HepG2 (cell line): ENCODE measurements at regions of chr5 and their contacts with region 1.

Region 1: DNA sequence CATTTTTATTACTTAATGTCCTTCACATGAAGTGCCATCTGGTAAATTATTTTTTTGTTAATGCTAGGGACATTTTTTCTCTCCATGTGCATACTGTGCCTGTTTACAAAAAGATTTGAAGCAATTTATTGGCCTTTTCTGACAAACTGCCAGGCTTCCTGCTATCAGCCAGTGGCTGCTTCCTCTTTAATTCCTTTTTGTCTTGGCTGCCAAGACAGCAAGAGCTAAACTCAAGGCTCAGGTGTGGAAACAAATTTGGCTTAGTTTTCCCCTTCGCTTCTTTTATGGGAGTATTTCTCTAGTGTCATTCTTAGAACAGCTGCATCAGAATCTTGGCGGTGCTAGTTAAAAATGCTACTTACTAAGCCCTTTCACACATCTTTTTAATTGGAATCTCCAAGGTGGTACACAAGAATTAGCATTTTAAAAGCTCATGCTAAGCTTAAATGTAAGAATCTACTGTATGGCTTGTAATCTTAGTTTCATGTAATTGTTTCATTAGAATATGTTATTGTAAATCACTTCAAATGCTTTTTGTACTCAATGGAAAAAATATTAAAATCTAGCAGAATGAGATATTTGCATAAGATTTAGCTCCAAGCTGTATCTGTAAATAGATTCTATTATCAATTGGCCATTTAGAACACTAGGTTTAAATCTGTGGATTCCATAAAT is 134.2 kb upstream of the RASGRF2 start:
- DNase-seq: no peak
- ATAC-seq: no peak
- H3K4me3 ChIP-seq: no peak overlapping the region
- H3K27ac ChIP-seq: no peak overlapping the region
- H3K4me1 ChIP-seq: no peaks in the 10 kb centered on the region
- H3K27me3 ChIP-seq: no peaks in the 10 kb centered on the region
- CTCF ChIP-seq: no peak
- EP300 ChIP-seq: no peak
- POLR2A ChIP-seq: no peak
- RAD21 ChIP-seq: no peak

Region 2: DNA sequence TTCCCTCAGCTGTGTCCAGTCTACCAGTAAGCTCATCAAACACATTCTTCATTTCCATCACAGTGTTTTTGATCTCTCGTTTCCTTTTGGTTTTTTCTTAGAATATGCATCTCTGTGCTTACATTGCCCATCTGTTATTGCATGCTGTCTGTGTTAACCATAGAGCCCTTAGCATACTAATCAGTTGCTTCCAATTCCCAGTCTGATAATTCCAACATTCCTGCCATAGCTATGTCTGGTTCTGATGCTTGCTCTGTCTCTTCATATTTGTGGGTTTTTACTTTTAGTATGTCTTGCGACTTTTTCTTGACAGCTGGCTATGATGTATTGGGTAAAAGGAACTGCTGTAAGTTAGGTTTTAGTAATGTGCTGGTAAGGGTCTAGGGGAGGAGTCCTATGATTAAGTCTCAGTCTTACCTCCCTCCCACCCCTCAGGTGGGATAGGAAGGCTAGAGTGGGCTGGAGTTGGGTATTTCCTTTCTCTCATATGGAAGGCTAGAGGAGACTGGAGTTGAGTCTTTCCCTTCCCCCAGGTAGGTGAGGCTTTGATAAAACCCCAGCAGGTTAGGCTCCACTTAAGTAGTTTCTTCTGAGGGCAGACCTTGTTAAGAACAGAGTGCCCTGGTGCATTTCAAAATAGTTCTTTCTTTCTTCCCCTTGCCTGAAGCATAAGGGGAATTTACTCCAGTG is 35.1 kb after region 1 on chr5:
- CTCF ChIA-PET with region 1: no interaction called
- POLR2A ChIA-PET with region 1: no interaction called
- in situ Hi-C with region 1: no loop called
- intact Hi-C with region 1: loop called (anchors 1 kb)
- DNase-seq: no peak
- ATAC-seq: no peak
- H3K4me3 ChIP-seq: no peak overlapping the region
- H3K27ac ChIP-seq: no peak overlapping the region
- H3K4me1 ChIP-seq: no peaks in the 10 kb centered on the region
- H3K27me3 ChIP-seq: no peaks in the 10 kb centered on the region
- CTCF ChIP-seq: no peak
- EP300 ChIP-seq: no peak
- POLR2A ChIP-seq: no peak
- RAD21 ChIP-seq: no peak